Activated CD4-positive, alpha-beta T cell treated with anti-CD3 and anti-CD28 coated beads, Interleukin-2, amount 10 ng/mL, durations not matched to agents 7 days and 5 days (primary cell): ENCODE measurements at regions of chr7 and their contacts with region 1.

Region 1: DNA sequence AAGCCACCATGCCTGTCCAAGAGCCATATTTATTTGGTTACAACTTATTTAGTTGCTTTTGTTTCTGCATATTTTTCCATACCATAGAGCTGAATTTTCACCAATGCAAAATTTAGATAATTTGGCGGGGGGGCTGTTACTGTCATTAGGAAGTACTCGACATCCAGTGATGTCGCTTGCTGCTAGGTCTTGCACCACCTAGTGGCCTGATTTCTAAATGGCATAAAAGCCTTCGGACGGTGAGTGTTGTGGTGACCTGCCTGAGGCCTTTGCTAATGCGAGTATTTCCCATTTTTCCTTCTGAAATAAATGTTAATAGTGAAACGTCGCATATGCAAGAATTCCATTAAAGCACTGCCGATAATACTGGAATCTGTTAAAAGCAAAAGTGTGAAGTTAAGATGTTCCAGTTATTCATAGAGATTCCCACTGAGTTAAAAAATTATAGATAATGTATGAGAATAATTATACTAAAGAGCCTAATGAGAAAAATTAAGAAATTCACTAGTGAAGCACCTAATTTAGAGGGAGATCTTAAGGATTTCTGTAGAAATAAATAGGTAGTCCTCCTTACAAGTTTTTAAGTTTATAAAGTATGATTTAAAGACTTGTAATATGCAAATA is 86.1 kb upstream of the DNAJB6 start:
- DNase-seq: peak; percentile 58
- H3K4me3 Mint-ChIP-seq: no peak overlapping the region
- H3K27ac Mint-ChIP-seq: no peak overlapping the region
- H3K4me1 Mint-ChIP-seq: no peaks in the 10 kb centered on the region
- H3K27me3 Mint-ChIP-seq: no peaks in the 10 kb centered on the region

Region 2: DNA sequence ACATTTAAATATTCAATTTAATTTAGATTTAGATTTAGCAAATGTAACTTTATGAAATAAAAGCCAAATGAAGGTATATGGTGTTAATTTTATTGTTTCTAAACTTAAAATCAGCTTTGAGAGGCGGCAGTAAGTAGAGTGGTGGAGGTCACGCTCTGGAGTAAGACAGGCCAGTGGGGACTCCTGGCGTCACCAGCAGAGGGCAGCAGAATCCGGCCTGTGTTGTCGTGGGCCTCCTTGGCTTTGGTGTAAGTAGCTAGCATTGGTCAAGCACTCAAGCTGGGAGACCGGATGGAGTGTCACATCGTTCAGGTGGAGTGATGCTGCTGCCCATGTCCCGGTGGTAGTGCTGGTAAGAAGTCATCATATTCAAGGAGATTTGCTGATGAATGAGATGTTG is 12.6 kb before region 1 on chr7:
- CTCF ChIA-PET with region 1: interaction called, 15 read pairs
- POLR2A ChIA-PET with region 1: no interaction called
- DNase-seq: no peak
- H3K4me3 Mint-ChIP-seq: no peak overlapping the region
- H3K27ac Mint-ChIP-seq: no peak overlapping the region
- H3K4me1 Mint-ChIP-seq: peaks cover 3% of the 10 kb centered on the region
- H3K27me3 Mint-ChIP-seq: no peaks in the 10 kb centered on the region